ENCODE measurements at regions of chr2 and their contacts with region 1.

Region 1: GRCh38 chr2:225002039-225002655 is 40.1 kb downstream of the DOCK10 start:
- DNase-seq: peak; percentile 28 to 89 (median 72)
- ATAC-seq: peak; percentile 84
- H3K4me3 ChIP-seq: peak overlapping the region in 1 of 2 experiments; percentile 17
- H3K4me3 Mint-ChIP-seq: peak overlapping the region; percentile 29
- H3K27ac ChIP-seq: peak overlapping the region; percentile 18 to 52
- H3K27ac Mint-ChIP-seq: peak overlapping the region; percentile 86
- H3K4me1 ChIP-seq: peaks cover 38% of the 10 kb centered on the region
- H3K4me1 Mint-ChIP-seq: peaks cover 87% of the 10 kb centered on the region
- H3K27me3 ChIP-seq: no peaks in the 10 kb centered on the region
- H3K27me3 Mint-ChIP-seq: no peaks in the 10 kb centered on the region
- CTCF ChIP-seq: peak; percentile 82

Region 2: GRCh38 chr2:224909885-224910573 is 92.1 kb before region 1 on chr2:
- CTCF ChIA-PET with region 1: interaction called, 16 read pairs
- POLR2A ChIA-PET with region 1: interaction called, 3 read pairs
- intact Hi-C with region 1: no loop called
- DNase-seq: peak in 4 of 9 experiments; percentile 50 to 75 (median 56)
- ATAC-seq: peak; percentile 78
- H3K4me3 ChIP-seq: no peak overlapping the region
- H3K4me3 Mint-ChIP-seq: peak overlapping the region; percentile 23
- H3K27ac ChIP-seq: peak overlapping the region in 1 of 2 experiments; percentile 29
- H3K27ac Mint-ChIP-seq: peak overlapping the region; percentile 90
- H3K4me1 ChIP-seq: peaks cover 22% of the 10 kb centered on the region
- H3K4me1 Mint-ChIP-seq: peaks cover 57% of the 10 kb centered on the region
- H3K27me3 ChIP-seq: no peaks in the 10 kb centered on the region
- H3K27me3 Mint-ChIP-seq: no peaks in the 10 kb centered on the region
- CTCF ChIP-seq: no peak

Region 3: DNA sequence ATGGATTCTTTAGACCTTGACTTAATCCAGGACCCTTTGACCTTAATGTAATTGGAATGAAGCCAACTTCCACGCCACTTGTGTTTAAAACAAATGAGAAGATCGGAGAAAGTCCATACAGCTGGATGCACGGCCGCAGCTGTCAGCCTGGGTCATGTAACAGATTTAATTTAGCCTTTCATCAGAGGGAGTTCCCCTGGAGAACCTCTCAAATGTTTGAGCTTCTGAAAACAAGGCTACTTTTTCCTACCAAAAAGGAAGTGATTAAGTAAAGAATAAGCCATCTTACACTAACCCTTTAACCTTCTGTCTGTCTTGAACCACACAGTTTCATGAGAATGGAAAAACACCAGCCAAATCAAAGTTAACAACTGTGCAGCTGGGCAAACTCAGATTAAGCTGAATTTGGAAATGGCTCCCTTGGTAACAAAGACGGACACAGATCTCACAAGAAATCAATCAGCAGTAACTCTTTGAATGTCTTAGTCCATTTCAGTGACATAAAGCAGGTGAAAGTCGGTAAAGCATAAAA is 63.4 kb before region 1 on chr2:
- CTCF ChIA-PET with region 1: interaction called, 63 read pairs
- POLR2A ChIA-PET with region 1: interaction called, 4 read pairs
- intact Hi-C with region 1: no loop called
- DNase-seq: peak in 1 of 9 experiments; percentile 52
- ATAC-seq: peak; percentile 58
- H3K4me3 ChIP-seq: peak overlapping the region in 1 of 2 experiments; percentile 9
- H3K4me3 Mint-ChIP-seq: peak overlapping the region; percentile 64
- H3K27ac ChIP-seq: peak overlapping the region; percentile 2 to 53
- H3K27ac Mint-ChIP-seq: peak overlapping the region; percentile 94
- H3K4me1 ChIP-seq: peaks cover 91% of the 10 kb centered on the region
- H3K4me1 Mint-ChIP-seq: peaks cover 92% of the 10 kb centered on the region
- H3K27me3 ChIP-seq: no peaks in the 10 kb centered on the region
- H3K27me3 Mint-ChIP-seq: no peaks in the 10 kb centered on the region
- CTCF ChIP-seq: no peak

Region 4: GRCh38 chr2:224959556-224959955 is 42.6 kb before region 1 on chr2:
- CTCF ChIA-PET with region 1: interaction called, 10 read pairs
- POLR2A ChIA-PET with region 1: no interaction called
- intact Hi-C with region 1: no loop called
- DNase-seq: no peak
- ATAC-seq: no peak
- H3K4me3 ChIP-seq: no peak overlapping the region
- H3K4me3 Mint-ChIP-seq: no peak overlapping the region
- H3K27ac ChIP-seq: no peak overlapping the region
- H3K27ac Mint-ChIP-seq: peak overlapping the region; percentile 30
- H3K4me1 ChIP-seq: peaks cover 23% of the 10 kb centered on the region
- H3K4me1 Mint-ChIP-seq: peaks cover 78% of the 10 kb centered on the region
- H3K27me3 ChIP-seq: no peaks in the 10 kb centered on the region
- H3K27me3 Mint-ChIP-seq: no peaks in the 10 kb centered on the region
- CTCF ChIP-seq: no peak

Region 5: GRCh38 chr2:225177098-225177497 is 175.0 kb after region 1 on chr2:
- CTCF ChIA-PET with region 1: no interaction called
- POLR2A ChIA-PET with region 1: no interaction called
- intact Hi-C with region 1: loop called in 1 of 2 experiments (anchors 1 kb)
- DNase-seq: peak in 1 of 9 experiments; percentile 2
- ATAC-seq: no peak
- H3K4me3 ChIP-seq: no peak overlapping the region
- H3K4me3 Mint-ChIP-seq: no peak overlapping the region
- H3K27ac ChIP-seq: no peak overlapping the region
- H3K27ac Mint-ChIP-seq: no peak overlapping the region
- H3K4me1 ChIP-seq: no peaks in the 10 kb centered on the region
- H3K4me1 Mint-ChIP-seq: peaks cover 5% of the 10 kb centered on the region
- H3K27me3 ChIP-seq: no peaks in the 10 kb centered on the region
- H3K27me3 Mint-ChIP-seq: no peaks in the 10 kb centered on the region
- CTCF ChIP-seq: no peak